A549 (cell line): ENCODE measurements at regions of chr7 and their contacts with region 1.

Region 1: DNA sequence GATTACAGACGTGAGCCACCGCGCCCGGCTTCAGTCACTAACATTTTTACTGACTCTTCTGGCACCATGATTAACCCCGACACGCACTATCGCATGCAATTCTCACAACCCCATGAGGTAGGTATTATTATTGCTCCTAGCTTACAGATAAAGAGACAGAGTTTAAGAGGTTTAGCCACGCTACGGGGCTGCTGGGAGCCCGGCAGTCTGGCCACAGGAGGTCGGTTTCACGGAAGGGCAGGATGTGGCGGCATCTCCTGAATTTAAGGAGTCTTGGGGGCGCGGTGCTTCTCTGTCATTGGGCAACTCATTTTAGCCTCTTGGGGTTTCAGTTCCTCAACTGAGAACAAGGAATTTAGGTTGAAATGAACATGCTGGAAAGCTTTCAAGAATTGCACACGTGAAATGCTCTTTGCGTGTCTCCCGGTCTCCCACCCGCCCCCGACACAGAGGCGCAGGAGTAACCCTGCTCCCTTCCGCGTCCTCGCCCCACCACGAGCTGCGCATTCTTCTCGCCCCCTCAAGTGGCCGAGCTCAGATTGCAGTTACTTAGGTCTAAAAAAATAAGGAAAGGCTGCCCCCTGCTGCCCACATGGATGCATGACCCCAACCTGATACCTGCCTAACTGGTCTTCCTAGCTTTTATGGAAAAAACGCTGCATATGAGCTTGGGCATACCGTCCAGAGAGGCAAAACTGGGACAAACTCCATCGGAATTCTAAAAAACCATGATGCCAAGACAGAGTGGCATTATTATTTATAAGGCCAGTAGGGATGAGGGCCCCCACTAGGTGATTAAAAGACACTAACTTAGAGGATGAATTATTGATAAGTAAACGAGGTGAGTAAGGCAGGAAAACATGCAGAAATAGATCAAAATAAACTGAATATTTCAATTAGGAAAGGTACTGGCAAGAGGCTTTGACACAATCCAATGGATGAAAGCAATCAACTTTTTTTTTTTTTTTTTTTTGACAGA is 12.4 kb downstream of the PRSS2 start:
- DNase-seq: peak; percentile 74 to 91
- ATAC-seq: peak; percentile 87 to 95
- H3K4me3 ChIP-seq: peak overlapping the region; percentile 34; the same call in 2 of the 3 replicates
- H3K27ac ChIP-seq: no peak overlapping the region
- H3K4me1 ChIP-seq: 0 out of 3 replicates have a peak, but pooled peaks cover 4% of the 10 kb centered on the region
- CTCF ChIP-seq: peak; percentile 98
- EP300 ChIP-seq: no peak
- POLR2A ChIP-seq: no peak
- RAD21 ChIP-seq: peak; percentile 94 to 96

Region 2: GRCh38 chr7:142516038-142516501 is 267.1 kb before region 1 on chr7:
- CTCF ChIA-PET with region 1: interaction called, 34 read pairs
- POLR2A ChIA-PET with region 1: no interaction called
- DNase-seq: peak; percentile 38 to 71
- ATAC-seq: peak; percentile 75 to 94
- H3K4me3 ChIP-seq: no peak overlapping the region
- H3K27ac ChIP-seq: no peak overlapping the region
- H3K4me1 ChIP-seq: no peaks in the 10 kb centered on the region
- CTCF ChIP-seq: peak; percentile 64
- EP300 ChIP-seq: no peak
- POLR2A ChIP-seq: no peak
- RAD21 ChIP-seq: peak; percentile 51 to 66

Region 3: DNA sequence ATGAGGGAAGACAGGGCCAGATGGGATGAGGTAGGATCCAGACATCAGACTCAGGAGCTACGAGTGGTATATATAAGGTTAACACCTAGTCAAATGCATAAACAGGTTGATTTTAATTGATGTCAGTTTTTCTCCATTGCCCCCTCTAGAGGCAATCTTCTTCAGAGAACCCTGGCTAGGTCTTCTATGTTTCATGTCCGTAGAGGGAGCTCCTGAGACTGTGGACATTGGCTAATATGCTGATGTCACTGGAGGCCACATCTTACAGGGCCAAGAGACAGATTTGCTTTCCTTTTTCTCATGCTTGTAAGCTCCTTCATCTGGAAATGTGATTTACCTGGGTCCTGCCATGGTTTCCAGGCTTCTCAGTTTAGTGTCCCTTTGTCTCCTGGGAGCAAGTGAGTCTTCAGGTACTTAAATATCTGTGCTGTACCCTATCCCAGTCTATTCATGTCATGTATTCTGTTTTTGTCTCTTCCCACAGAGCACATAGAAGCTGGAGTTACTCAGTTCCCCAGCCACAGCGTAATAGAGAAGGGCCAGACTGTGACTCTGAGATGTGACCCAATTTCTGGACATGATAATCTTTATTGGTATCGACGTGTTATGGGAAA is 195.5 kb before region 1 on chr7:
- CTCF ChIA-PET with region 1: interaction called, 12 read pairs
- POLR2A ChIA-PET with region 1: no interaction called
- DNase-seq: peak; percentile 85 to 88
- ATAC-seq: peak; percentile 92 to 97
- H3K4me3 ChIP-seq: no peak overlapping the region
- H3K27ac ChIP-seq: peak overlapping the region; percentile 29 to 69; a peak in 4 of 6 replicates
- H3K4me1 ChIP-seq: peaks cover 24% of the 10 kb centered on the region
- CTCF ChIP-seq: peak; percentile 86
- EP300 ChIP-seq: no peak
- POLR2A ChIP-seq: no peak
- RAD21 ChIP-seq: peak; percentile 46 to 50; a peak in 4 of 5 replicates

Region 4: GRCh38 chr7:142626420-142627035 is 156.7 kb before region 1 on chr7:
- CTCF ChIA-PET with region 1: interaction called, 66 read pairs
- POLR2A ChIA-PET with region 1: no interaction called
- DNase-seq: peak; percentile 16 to 48
- ATAC-seq: peak; percentile 74 to 93; a peak in 4 of 6 replicates
- H3K4me3 ChIP-seq: no peak overlapping the region
- H3K27ac ChIP-seq: no peak overlapping the region
- H3K4me1 ChIP-seq: no peaks in the 10 kb centered on the region
- CTCF ChIP-seq: peak; percentile 43
- EP300 ChIP-seq: no peak
- POLR2A ChIP-seq: no peak
- RAD21 ChIP-seq: peak in 1 of 2 experiments; percentile 32; a peak in 2 of 5 replicates

Region 5: GRCh38 chr7:142714375-142714774 is 68.8 kb before region 1 on chr7:
- CTCF ChIA-PET with region 1: interaction called, 10 read pairs
- POLR2A ChIA-PET with region 1: no interaction called
- DNase-seq: no peak
- ATAC-seq: no peak
- H3K4me3 ChIP-seq: no peak overlapping the region
- H3K27ac ChIP-seq: no peak overlapping the region
- H3K4me1 ChIP-seq: no peaks in the 10 kb centered on the region
- CTCF ChIP-seq: no peak
- EP300 ChIP-seq: no peak
- POLR2A ChIP-seq: no peak
- RAD21 ChIP-seq: no peak

Region 6: DNA sequence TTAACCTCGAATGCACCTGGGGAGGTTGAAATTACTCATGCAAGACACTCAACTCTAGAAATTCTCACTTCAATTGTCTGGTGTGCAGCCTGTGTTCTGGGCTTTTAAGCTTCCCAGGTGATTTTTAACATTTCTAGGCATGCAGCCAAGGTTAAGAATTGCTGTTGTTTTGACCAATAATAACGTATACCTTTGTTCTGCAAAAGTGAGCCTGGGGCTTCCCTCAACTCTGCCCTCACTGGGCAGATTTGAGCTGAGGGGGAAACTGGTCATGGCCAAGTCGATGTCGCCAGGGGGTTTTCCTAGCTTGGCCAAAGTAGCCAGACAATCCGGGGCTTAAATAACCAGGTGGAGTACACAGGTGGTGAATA is 11.9 kb before region 1 on chr7:
- CTCF ChIA-PET with region 1: interaction called, 32 read pairs
- POLR2A ChIA-PET with region 1: no interaction called
- DNase-seq: no peak
- ATAC-seq: no peak
- H3K4me3 ChIP-seq: no peak overlapping the region
- H3K27ac ChIP-seq: no peak overlapping the region
- H3K4me1 ChIP-seq: no peaks in the 10 kb centered on the region
- CTCF ChIP-seq: no peak
- EP300 ChIP-seq: no peak
- POLR2A ChIP-seq: no peak
- RAD21 ChIP-seq: no peak

Region 7: DNA sequence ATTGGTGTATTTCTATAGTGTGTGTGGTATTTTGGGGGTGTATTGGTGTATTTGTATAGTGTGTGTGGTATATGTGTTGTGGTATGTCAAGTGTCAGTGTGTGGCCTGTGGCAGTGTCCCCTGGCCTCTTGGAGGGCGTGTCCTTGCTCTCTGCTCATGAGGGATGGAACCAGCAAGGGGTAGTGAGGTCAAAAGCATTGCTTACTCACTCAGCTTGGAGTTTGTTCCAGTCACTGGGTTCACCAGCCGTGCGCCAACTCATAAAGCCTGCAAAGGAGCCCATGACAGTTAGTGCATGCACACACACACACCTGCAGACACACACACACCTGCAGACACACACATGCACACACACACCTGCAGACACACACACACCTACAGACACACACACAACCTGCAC is 106.6 kb after region 1 on chr7:
- CTCF ChIA-PET with region 1: no interaction called
- POLR2A ChIA-PET with region 1: no interaction called
- DNase-seq: no peak
- ATAC-seq: no peak
- H3K4me3 ChIP-seq: no peak overlapping the region
- H3K27ac ChIP-seq: no peak overlapping the region
- H3K4me1 ChIP-seq: no peaks in the 10 kb centered on the region
- CTCF ChIP-seq: no peak
- EP300 ChIP-seq: no peak
- POLR2A ChIP-seq: no peak
- RAD21 ChIP-seq: no peak